ENCODE measurements at regions of chr18 and their contacts with region 1.

Region 1: DNA sequence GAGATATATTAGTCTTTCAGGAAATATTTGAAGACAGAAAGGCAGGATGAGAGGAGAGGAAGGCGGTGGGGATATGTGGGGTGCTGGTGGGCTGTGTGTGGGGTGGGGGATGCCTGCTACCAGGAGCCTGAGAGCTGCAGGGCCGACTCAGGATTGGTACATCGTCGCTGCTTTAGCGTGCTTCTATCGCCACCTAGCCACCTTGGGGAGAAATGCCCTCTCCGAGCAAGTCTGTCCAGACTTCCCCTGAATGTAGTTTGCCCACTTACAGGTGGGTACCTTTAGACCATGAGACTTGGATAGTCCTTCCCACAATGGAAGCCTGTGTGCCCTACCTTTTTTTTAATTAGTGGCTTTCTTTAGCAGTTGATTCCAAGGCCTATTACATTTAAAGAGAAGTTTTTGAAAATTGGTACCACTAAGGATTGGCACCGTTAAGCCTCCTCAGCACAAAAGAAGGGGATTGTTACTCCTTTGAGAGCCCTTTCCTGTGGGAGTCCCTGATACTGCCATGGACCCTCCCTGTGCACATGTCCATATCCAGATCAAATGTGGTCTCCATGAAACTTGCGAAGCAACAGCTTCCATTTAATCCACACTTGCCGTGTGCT is 114.1 kb upstream of the NDUFV2 start:
- DNase-seq: no peak
- H3K4me3 ChIP-seq: no peak overlapping the region
- H3K27me3 ChIP-seq: no peaks in the 10 kb centered on the region
- CTCF ChIP-seq: peak; percentile 89

Region 2: DNA sequence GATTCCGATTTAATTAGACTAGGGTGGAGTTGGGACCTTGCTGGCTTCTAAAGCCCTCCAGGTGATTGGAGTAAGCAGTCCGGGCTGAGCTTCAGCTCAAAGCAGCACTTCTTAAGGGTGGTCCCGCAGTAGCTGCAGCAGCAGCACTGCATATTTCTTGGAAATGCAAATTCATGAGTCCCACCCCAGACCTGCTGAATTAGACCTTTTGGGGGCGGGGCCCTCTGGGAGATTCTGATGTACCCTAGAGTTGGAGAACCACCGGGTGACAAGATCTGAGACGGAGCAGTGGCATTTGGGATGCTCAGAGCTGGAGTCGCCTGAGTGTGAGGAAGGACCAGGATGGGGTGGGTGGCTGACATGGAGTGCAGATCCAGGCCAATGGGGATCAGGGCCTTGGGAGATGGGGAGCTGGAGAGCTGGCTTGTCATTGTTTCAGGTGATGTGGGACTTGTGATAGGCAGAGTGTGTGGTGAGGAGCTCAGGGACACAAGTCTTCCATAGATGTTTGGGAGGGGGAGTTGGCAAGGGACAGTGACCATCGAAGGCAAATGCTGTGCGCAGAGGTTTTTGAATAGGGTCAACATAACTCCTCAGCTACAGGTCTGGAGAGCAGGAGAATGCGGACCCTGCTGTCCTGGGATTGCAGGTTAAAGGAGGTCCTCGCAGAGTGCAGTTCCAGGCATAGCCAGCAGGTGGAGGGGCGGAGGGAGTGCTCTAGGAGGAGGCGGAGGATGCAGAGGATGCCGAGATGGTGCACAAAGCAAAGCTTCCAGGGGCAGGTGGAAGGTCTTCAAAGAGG is 510.0 kb before region 1 on chr18:
- CTCF ChIA-PET with region 1: interaction called, 17 read pairs
- POLR2A ChIA-PET with region 1: no interaction called
- DNase-seq: no peak
- H3K4me3 ChIP-seq: no peak overlapping the region
- H3K27me3 ChIP-seq: peaks cover 9% of the 10 kb centered on the region
- CTCF ChIP-seq: peak; percentile 94

Region 3: GRCh38 chr18:8661754-8662569 is 326.4 kb before region 1 on chr18:
- CTCF ChIA-PET with region 1: interaction called, 75 read pairs
- POLR2A ChIA-PET with region 1: interaction called, 3 read pairs
- DNase-seq: no peak
- H3K4me3 ChIP-seq: no peak overlapping the region
- H3K27me3 ChIP-seq: no peaks in the 10 kb centered on the region
- CTCF ChIP-seq: no peak

Region 4: DNA sequence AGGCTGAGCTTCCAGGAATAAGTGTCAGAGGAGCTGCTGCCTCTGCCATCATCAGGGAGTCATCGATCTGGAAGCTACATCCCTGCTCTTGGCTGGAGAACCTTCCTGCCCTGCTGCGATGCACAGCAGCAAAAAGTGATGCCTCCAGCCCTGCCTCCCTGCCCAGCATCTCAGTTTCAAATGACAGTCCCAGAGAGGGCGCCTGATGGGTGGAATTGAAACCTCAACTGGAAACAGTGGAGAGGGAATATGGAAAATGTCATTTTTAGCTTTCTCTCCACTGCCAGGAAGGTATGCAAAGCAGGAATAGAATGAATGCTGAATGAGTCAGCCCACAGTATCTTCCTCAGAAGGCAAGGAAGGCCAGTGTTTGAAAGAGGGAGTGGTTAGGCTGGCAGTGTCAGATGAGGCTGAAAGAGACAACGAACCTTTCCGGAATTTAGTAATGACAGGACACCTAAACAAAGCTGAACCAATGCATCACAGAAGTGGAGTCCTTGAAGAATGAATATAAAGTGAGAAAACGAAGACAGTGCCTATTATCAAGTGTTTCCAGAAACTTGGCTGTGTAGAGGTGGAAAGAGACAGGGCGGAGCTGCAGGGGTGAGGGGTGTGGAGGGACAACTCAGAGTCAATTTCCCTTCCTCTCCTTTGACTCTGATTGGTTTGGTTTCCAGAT is 39.8 kb before region 1 on chr18:
- CTCF ChIA-PET with region 1: interaction called, 42 read pairs
- POLR2A ChIA-PET with region 1: interaction called, 4 read pairs
- DNase-seq: peak; percentile 81
- H3K4me3 ChIP-seq: peak overlapping the region; percentile 20
- H3K27me3 ChIP-seq: no peaks in the 10 kb centered on the region
- CTCF ChIP-seq: 0 out of 2 replicates have a peak, but pooled peaks have one; percentile 5

Region 5: DNA sequence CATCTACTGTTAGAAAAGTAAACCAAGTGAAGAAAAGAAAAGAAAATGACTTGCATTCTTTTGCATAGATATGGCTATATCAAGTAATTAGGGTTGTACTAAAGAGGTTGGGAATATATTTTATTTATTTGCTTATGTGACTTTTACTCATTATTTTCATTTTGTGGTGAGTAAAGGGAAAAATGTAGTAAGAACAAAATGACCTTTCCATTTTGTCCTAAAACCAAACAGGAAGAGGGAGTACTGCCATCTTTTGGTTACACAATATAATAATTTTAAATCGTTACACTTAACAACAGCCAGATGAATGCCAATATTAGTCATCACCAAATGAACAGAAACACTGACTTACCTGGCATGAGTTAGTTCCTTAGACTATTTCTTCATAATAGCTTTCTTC is 66.8 kb after region 1 on chr18:
- CTCF ChIA-PET with region 1: interaction called, 10 read pairs
- POLR2A ChIA-PET with region 1: no interaction called
- DNase-seq: peak; percentile 74
- H3K4me3 ChIP-seq: no peak overlapping the region
- H3K27me3 ChIP-seq: no peaks in the 10 kb centered on the region
- CTCF ChIP-seq: peak; percentile 27; the same call in 1 of the 2 replicates

Region 6: GRCh38 chr18:9191658-9192256 is 203.4 kb after region 1 on chr18:
- CTCF ChIA-PET with region 1: no interaction called
- POLR2A ChIA-PET with region 1: no interaction called
- DNase-seq: no peak
- H3K4me3 ChIP-seq: no peak overlapping the region
- H3K27me3 ChIP-seq: no peaks in the 10 kb centered on the region
- CTCF ChIP-seq: no peak

Measured in BJ (cell line).